Posterior cingulate gyrus (tissue), 11 donors: ENCODE measurements at regions of chr1 and their contacts with region 1.

Region 1: GRCh38 chr1:59759156-59759925 is 55.4 kb upstream of the HOOK1 start:
- DNase-seq: peak; percentile 68 to 98 (median 83)

Region 2: GRCh38 chr1:58515794-58516401 is 1243.4 kb before region 1 on chr1:
- intact Hi-C with region 1: loop called (anchors 10 kb)
- DNase-seq: peak in 4 of 10 donors; percentile 4 to 67 (median 14)

Region 3: GRCh38 chr1:58739856-58740466 is 1019.4 kb before region 1 on chr1:
- intact Hi-C with region 1: loop called (anchors 1 kb)
- DNase-seq: no peak

Region 4: GRCh38 chr1:59707178-59707791 is 52.1 kb before region 1 on chr1:
- intact Hi-C with region 1: loop called (anchors 10 kb)
- DNase-seq: peak in 1 of 10 donors; percentile 14